CD4-positive, alpha-beta T cell (primary cell): ENCODE measurements at regions of chr11 and their contacts with region 1.

Region 1: GRCh38 chr11:78139422-78140391 is at the start of gene ALG8:
- DNase-seq: peak; percentile 96 to 98 (median 97)
- ATAC-seq: peak; percentile 94
- H3K4me3 ChIP-seq: peak within 1 kb of the TSS; percentile 82
- H3K4me3 Mint-ChIP-seq: peak within 1 kb of the TSS; percentile 96
- H3K27ac ChIP-seq: peak within 1 kb of the TSS; percentile 72 to 84
- H3K27ac Mint-ChIP-seq: peak within 1 kb of the TSS; percentile 91
- H3K4me1 ChIP-seq: peaks cover 20% of the 10 kb centered on the region
- H3K4me1 Mint-ChIP-seq: peaks cover 49% of the 10 kb centered on the region
- H3K27me3 ChIP-seq: no peaks in the 10 kb centered on the region
- H3K27me3 Mint-ChIP-seq: no peaks in the 10 kb centered on the region
- CTCF ChIP-seq: no peak
- total RNA-seq, gene ALG8: 14.4 to 14.9 TPM

Region 2: DNA sequence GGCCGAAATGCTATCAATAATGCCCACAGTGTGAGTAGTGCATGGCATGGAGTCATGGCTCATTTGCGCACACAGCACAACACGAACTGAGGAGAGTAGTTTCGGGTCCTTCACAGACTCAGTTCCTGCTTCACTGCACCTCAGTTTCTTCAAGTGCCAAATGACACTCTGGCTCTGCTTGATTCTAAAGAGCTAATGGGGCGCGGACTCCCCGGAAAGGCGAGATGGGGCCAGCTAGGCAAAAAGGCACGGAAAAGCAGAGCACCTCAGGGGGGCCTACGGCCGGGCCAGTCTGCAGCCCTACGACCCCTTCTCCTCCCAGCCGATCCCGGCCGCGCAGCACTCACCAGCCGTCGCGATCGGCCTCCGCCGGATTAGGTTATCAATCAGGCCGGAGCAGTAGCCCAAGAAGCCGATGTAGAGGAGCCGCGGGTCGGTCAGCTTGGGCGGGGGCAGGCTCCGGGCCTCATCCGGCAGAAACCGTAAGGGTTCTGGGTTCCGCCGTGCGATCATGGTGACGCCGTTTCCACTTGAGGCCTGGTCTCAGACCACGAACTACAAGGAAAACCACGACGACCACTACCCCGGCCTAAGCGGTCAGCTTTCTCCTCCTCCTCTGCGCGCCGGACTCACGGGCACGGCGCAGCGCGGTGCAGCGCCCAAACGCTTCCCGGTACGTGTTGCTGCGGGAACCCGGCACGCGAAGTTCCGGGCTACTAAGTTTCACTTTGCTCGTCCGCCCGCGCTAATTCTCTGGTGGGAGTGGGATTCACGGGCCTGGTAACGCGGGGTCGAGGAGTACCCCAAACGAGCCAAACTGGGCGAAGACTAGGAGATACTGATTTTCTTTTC is 60.2 kb before region 1 on chr11 and contains the start of gene NDUFC2:
- CTCF ChIA-PET with region 1: no interaction called
- POLR2A ChIA-PET with region 1: interaction called, 13 read pairs
- intact Hi-C with region 1: loop called in 1 of 2 experiments (anchors 2 kb)
- DNase-seq: peak; percentile 45 to 82 (median 58)
- ATAC-seq: peak; percentile 79
- H3K4me3 ChIP-seq: peak within 1 kb of the TSS; percentile 88
- H3K4me3 Mint-ChIP-seq: peak within 1 kb of the TSS; percentile 96
- H3K27ac ChIP-seq: peak within 1 kb of the TSS; percentile 57 to 65
- H3K27ac Mint-ChIP-seq: peak within 1 kb of the TSS; percentile 93
- H3K4me1 ChIP-seq: peaks cover 41% of the 10 kb centered on the region
- H3K4me1 Mint-ChIP-seq: peaks cover 60% of the 10 kb centered on the region
- H3K27me3 ChIP-seq: no peaks in the 10 kb centered on the region
- H3K27me3 Mint-ChIP-seq: no peaks in the 10 kb centered on the region
- CTCF ChIP-seq: no peak
- total RNA-seq, gene NDUFC2: 62.6 to 68.5 TPM

Region 3: DNA sequence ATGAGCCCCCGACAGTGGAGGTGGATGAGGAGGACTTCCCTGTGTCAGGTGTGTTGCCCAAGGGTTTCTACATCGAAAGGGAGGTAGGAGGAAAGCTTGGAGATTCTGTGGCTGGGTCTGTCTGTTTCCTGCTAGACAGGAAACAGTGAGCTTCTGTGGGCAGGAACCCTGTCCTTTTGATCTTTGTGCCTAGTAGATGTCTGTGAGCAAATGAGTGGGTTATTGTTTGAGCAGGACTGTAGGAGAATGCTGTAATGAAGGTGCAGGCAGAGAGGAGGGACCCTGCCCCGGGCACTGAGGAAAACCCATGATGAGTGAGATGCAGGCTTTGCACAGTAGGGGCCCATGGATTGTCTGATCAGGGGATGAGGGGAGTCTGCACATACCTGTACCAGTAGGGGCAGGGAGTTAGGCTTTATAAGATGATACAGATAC is 63.0 kb after region 1 on chr11:
- CTCF ChIA-PET with region 1: interaction called, 5 read pairs
- POLR2A ChIA-PET with region 1: interaction called, 34 read pairs
- intact Hi-C with region 1: loop called in 1 of 2 experiments (anchors 1 kb)
- DNase-seq: peak; percentile 43 to 93 (median 60)
- ATAC-seq: peak; percentile 76
- H3K4me3 ChIP-seq: peak overlapping the region; percentile 30
- H3K4me3 Mint-ChIP-seq: peak overlapping the region; percentile 86
- H3K27ac ChIP-seq: peak overlapping the region; percentile 53 to 98
- H3K27ac Mint-ChIP-seq: peak overlapping the region; percentile 98
- H3K4me1 ChIP-seq: peaks cover 64% of the 10 kb centered on the region
- H3K4me1 Mint-ChIP-seq: peaks cover 51% of the 10 kb centered on the region
- H3K27me3 ChIP-seq: no peaks in the 10 kb centered on the region
- H3K27me3 Mint-ChIP-seq: no peaks in the 10 kb centered on the region
- CTCF ChIP-seq: no peak

Region 4: GRCh38 chr11:78416305-78417178 is 276.8 kb after region 1 on chr11:
- CTCF ChIA-PET with region 1: interaction called, 5 read pairs
- POLR2A ChIA-PET with region 1: interaction called, 6 read pairs
- intact Hi-C with region 1: loop called (anchors 2 to 5 kb)
- DNase-seq: peak; percentile 57 to 86 (median 74)
- ATAC-seq: peak; percentile 70
- H3K4me3 ChIP-seq: peak overlapping the region; percentile 59
- H3K4me3 Mint-ChIP-seq: peak overlapping the region; percentile 88
- H3K27ac ChIP-seq: peak overlapping the region in 1 of 2 donors; percentile 4
- H3K27ac Mint-ChIP-seq: peak overlapping the region; percentile 84
- H3K4me1 ChIP-seq: peaks cover 33% of the 10 kb centered on the region
- H3K4me1 Mint-ChIP-seq: peaks cover 22% of the 10 kb centered on the region
- H3K27me3 ChIP-seq: peaks cover 0 to 5% of the 10 kb centered on the region in 2 experiments
- H3K27me3 Mint-ChIP-seq: peaks cover 28% of the 10 kb centered on the region
- CTCF ChIP-seq: peak; percentile 73